ENCODE measurements at regions of chr4 and their contacts with region 1.

Region 1: DNA sequence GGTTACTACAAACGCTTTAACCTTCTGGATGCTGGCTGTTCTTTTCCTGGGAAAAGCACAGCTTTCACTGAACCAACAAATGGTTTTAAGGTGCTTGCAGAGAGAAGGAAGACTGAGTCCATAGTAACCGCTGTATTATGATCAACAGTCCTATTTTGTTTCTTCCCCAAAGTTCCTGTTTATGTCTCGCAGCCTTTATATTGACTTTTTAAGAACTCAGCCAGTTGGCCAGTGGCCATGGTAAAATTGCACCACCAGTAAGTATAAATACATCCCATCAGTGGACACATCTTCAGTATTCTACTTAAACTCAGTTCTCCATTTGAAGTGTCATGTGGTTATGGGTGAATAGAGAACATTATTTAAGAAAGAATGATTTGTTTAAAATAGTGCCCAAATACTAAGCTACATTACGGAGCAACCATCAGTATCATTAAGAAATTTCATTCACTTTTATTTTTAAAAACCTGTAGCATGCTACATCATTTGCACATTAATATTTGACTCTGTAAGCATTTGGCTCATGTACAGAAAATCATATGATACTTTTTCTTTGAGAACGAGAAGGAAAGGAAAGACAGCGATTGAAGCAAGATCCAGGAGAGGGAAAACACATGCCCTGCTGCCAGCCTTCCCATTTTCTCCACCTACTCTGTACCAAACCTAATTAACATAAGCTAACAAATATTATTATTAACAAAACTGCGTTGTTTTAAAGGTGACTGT is 287.0 kb downstream of the ARHGAP24 start:
- DNase-seq: no peak
- H3K4me3 ChIP-seq: peak overlapping the region in 3 of 4 donors; percentile 15 to 24 (median 21)
- H3K27ac ChIP-seq: peak overlapping the region; percentile 62 to 73 (median 64)
- H3K4me1 ChIP-seq: peaks cover 28 to 32% (median 30%) of the 10 kb centered on the region in 4 donors
- H3K27me3 ChIP-seq: no peaks in the 10 kb centered on the region
- CTCF ChIP-seq: no peak
- EP300 ChIP-seq: no peak
- POLR2A ChIP-seq: no peak

Region 2: GRCh38 chr4:85798012-85798770 is 36.2 kb after region 1 on chr4:
- intact Hi-C with region 1: loop called (anchors 5 kb)
- DNase-seq: no peak
- H3K4me3 ChIP-seq: no peak overlapping the region
- H3K27ac ChIP-seq: no peak overlapping the region
- H3K4me1 ChIP-seq: peaks cover 6 to 43% (median 21%) of the 10 kb centered on the region in 4 donors
- H3K27me3 ChIP-seq: no peaks in the 10 kb centered on the region
- CTCF ChIP-seq: no peak
- EP300 ChIP-seq: no peak
- POLR2A ChIP-seq: no peak

Region 3: GRCh38 chr4:85938062-85938461 is 176.1 kb after region 1 on chr4:
- intact Hi-C with region 1: no loop called
- DNase-seq: no peak
- H3K4me3 ChIP-seq: no peak overlapping the region
- H3K27ac ChIP-seq: no peak overlapping the region
- H3K4me1 ChIP-seq: peaks cover 0 to 3% (median 1%) of the 10 kb centered on the region in 4 donors
- H3K27me3 ChIP-seq: no peaks in the 10 kb centered on the region
- CTCF ChIP-seq: no peak
- EP300 ChIP-seq: no peak
- POLR2A ChIP-seq: no peak

Region 4: GRCh38 chr4:86160426-86160825 is 398.5 kb after region 1 on chr4:
- intact Hi-C with region 1: no loop called
- DNase-seq: no peak
- H3K4me3 ChIP-seq: no peak overlapping the region
- H3K27ac ChIP-seq: no peak overlapping the region
- H3K4me1 ChIP-seq: no peaks in the 10 kb centered on the region
- H3K27me3 ChIP-seq: no peaks in the 10 kb centered on the region
- CTCF ChIP-seq: no peak
- EP300 ChIP-seq: no peak
- POLR2A ChIP-seq: no peak